Common myeloid progenitor, CD34-positive (primary cell): ENCODE measurements at regions of chr5 and their contacts with region 1.

Region 1: DNA sequence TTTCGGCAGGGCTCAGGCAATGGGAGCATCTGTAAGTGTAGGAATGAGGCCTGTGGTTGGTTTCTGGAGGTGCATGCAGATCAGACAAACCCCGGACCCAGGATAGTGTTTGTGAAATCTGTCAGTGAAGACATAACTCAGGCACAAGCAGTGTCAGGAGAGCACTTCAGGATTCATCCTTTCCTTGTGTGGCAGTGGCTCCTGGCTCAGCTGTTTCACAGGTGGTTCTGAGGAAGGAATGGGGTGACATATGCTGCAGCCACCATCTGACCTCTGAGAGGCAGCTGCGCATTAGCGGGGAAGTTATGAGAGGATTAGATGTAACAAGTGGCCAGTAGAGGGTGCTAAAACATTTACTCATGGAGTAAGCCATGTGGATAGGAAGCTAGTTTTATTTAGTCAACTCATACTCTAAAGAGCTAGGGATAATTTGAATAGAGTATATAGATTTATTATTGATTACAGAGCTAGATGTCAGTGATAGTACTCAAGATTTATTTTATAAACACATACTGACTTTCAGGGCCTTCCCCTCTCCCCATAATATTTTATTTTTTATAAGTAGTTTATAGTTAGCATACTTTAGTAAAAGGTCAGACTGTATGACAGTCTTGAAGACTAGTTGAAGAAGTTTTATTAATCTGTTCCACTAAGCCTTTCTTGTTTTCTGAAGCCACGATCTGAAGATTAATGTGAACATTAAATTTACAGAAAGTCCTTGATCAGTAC is 28.4 kb downstream of the NNT start:
- DNase-seq: peak; percentile 72 to 86 (median 84)
- H3K4me3 ChIP-seq: no peak overlapping the region
- H3K27ac ChIP-seq: peak overlapping the region in 1 of 2 experiments; percentile 40
- H3K4me1 ChIP-seq: no peaks in the 10 kb centered on the region
- H3K27me3 ChIP-seq: no peaks in the 10 kb centered on the region

Region 2: GRCh38 chr5:43497311-43498104 is 133.8 kb before region 1 on chr5:
- CTCF ChIA-PET with region 1: no interaction called
- POLR2A ChIA-PET with region 1: no interaction called
- DNase-seq: no peak
- H3K4me3 ChIP-seq: no peak overlapping the region
- H3K27ac ChIP-seq: no peak overlapping the region
- H3K4me1 ChIP-seq: no peaks in the 10 kb centered on the region
- H3K27me3 ChIP-seq: no peaks in the 10 kb centered on the region

Region 3: DNA sequence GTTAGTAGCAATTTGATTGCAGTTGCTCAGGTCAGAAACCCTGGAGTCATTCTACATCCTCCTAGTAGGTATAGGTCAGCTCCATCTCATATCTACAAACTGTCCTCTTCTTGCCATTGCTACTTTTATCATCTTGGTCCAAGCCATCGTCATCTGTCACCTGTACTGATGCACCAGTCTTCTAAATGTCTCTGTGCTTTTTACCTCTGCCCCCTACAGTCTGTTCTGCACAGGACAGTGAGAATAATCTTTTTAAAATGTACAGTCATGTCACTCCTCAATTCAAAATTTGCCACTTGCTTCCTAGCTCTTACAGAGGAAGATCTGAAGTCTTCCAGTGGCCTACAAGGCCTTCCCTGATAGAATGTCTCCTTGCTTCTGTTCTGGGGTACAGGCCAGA is 21.6 kb before region 1 on chr5:
- CTCF ChIA-PET with region 1: interaction called, 11 read pairs
- POLR2A ChIA-PET with region 1: no interaction called
- DNase-seq: peak in 2 of 3 donors; percentile 24 to 33
- H3K4me3 ChIP-seq: no peak overlapping the region
- H3K27ac ChIP-seq: no peak overlapping the region
- H3K4me1 ChIP-seq: peaks cover 0 to 2% (median under 1%) of the 10 kb centered on the region in 4 experiments
- H3K27me3 ChIP-seq: no peaks in the 10 kb centered on the region

Region 4: DNA sequence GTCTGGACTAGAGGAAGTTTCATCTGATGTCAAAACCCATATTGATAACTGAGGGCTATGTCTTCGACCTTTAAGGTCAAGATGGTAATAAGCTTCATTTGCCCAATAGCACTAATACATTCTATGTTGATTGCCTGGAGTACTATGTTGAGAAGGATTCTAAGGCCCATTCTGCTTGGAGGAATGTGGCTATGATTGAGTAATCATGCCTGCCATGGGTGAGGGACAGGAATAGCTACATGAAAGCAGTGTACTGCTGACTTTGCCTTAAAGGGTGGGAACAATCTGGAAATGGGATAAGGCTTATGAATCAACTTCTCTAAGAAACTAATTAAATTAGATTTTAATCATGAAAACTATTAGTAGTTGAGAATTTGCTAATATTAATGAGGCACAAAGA is 14.8 kb before region 1 on chr5:
- CTCF ChIA-PET with region 1: interaction called, 27 read pairs
- POLR2A ChIA-PET with region 1: interaction called, 3 read pairs
- DNase-seq: no peak
- H3K4me3 ChIP-seq: no peak overlapping the region
- H3K27ac ChIP-seq: no peak overlapping the region
- H3K4me1 ChIP-seq: no peaks in the 10 kb centered on the region
- H3K27me3 ChIP-seq: no peaks in the 10 kb centered on the region

Region 5: GRCh38 chr5:43642428-43642827 is 11.1 kb after region 1 on chr5:
- CTCF ChIA-PET with region 1: interaction called, 12 read pairs
- POLR2A ChIA-PET with region 1: no interaction called
- DNase-seq: no peak
- H3K4me3 ChIP-seq: no peak overlapping the region
- H3K27ac ChIP-seq: no peak overlapping the region
- H3K4me1 ChIP-seq: peaks cover 0 to 2% (median under 1%) of the 10 kb centered on the region in 4 experiments
- H3K27me3 ChIP-seq: no peaks in the 10 kb centered on the region

Region 6: GRCh38 chr5:43649256-43649655 is 17.9 kb after region 1 on chr5:
- CTCF ChIA-PET with region 1: interaction called, 29 read pairs
- POLR2A ChIA-PET with region 1: no interaction called
- DNase-seq: no peak
- H3K4me3 ChIP-seq: no peak overlapping the region
- H3K27ac ChIP-seq: no peak overlapping the region
- H3K4me1 ChIP-seq: no peaks in the 10 kb centered on the region
- H3K27me3 ChIP-seq: no peaks in the 10 kb centered on the region